CD14-positive monocyte (primary cell): ENCODE measurements at regions of chr10 and their contacts with region 1.

Region 1: GRCh38 chr10:73908853-73909538 is 1.9 kb upstream of the PLAU start:
- DNase-seq: peak; percentile 93 to 100 (median 93)
- H3K4me3 ChIP-seq: no peak overlapping the region
- H3K4me3 Mint-ChIP-seq: peak overlapping the region in 1 of 2 donors; percentile 30
- H3K27ac ChIP-seq: peak overlapping the region; percentile 41 to 47
- H3K27ac Mint-ChIP-seq: peak overlapping the region; percentile 57 to 95 (median 88)
- H3K4me1 ChIP-seq: peaks cover 66 to 74% of the 10 kb centered on the region in 2 donors
- H3K4me1 Mint-ChIP-seq: peaks cover 72% of the 10 kb centered on the region
- H3K27me3 ChIP-seq: peaks cover 0 to 5% of the 10 kb centered on the region in 2 donors
- H3K27me3 Mint-ChIP-seq: peaks cover 6 to 17% (median 12%) of the 10 kb centered on the region in 3 donors
- CTCF ChIP-seq: no peak

Region 2: DNA sequence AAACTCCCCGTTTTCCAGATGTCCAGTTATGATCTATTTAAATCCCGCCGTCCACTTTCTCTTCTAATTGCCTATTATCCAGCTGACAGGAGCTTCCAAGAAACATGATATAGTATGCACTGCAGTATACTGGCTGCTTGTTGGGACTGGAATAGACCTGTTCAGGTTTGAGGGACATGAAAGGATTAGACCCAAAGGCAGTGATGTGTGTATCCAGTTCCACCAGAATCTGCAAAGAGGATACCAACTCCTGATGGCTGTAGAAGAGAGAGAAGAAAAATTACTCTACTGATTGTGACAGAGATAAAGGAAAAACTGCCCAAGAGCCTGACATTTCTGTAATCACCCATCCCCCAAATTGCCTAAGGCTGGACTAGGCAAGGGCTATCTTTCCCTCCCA is 484.5 kb before region 1 on chr10:
- intact Hi-C with region 1: no loop called
- DNase-seq: no peak
- H3K4me3 ChIP-seq: no peak overlapping the region
- H3K4me3 Mint-ChIP-seq: no peak overlapping the region
- H3K27ac ChIP-seq: no peak overlapping the region
- H3K27ac Mint-ChIP-seq: no peak overlapping the region
- H3K4me1 ChIP-seq: no peaks in the 10 kb centered on the region
- H3K4me1 Mint-ChIP-seq: no peaks in the 10 kb centered on the region
- H3K27me3 ChIP-seq: no peaks in the 10 kb centered on the region
- H3K27me3 Mint-ChIP-seq: no peaks in the 10 kb centered on the region
- CTCF ChIP-seq: no peak

Region 3: GRCh38 chr10:73997787-73998622 is 89.0 kb after region 1 on chr10 and contains the start of gene VCL:
- intact Hi-C with region 1: loop called in 1 of 2 experiments (anchors 10 kb)
- DNase-seq: peak; percentile 92 to 95 (median 92)
- H3K4me3 ChIP-seq: peak within 1 kb of the TSS; percentile 84 to 97 (median 87)
- H3K4me3 Mint-ChIP-seq: peak within 1 kb of the TSS; percentile 96 to 97
- H3K27ac ChIP-seq: peak within 1 kb of the TSS; percentile 63 to 92
- H3K27ac Mint-ChIP-seq: peak within 1 kb of the TSS; percentile 89 to 97 (median 95)
- H3K4me1 ChIP-seq: peaks cover 55 to 64% of the 10 kb centered on the region in 2 donors
- H3K4me1 Mint-ChIP-seq: peaks cover 67% of the 10 kb centered on the region
- H3K27me3 ChIP-seq: no peaks in the 10 kb centered on the region
- H3K27me3 Mint-ChIP-seq: no peaks in the 10 kb centered on the region
- CTCF ChIP-seq: no peak
- polyA plus RNA-seq, gene VCL: 39.1 to 68.4 (median 52.8) TPM